Activated CD4-positive, alpha-beta T cell treated with anti-CD3 and anti-CD28 coated beads for 36 hours (primary cell): ENCODE measurements at regions of chr3 and their contacts with region 1.

Region 1: DNA sequence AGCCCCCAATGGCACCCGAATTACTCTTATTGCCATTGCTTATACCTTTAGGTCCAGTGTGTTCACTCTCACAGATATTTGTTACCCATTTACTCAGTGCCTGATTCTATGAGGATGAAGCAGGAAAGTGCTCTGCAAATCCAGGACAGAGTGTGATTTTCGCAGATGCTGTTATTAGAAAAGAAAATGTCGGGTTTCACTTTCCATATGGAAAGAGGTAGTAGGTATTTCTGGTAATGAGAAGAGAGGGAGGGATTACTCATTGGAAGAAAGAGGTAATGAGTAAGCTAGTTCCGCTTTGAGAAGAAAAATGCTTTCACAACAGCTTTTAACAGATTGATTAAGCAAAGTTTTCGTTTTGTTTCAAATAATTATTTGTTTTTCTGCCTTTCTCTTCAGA is 336.3 kb upstream of the CFAP20DC start:
- DNase-seq: no peak
- ATAC-seq: peak; percentile 28
- H3K4me3 Mint-ChIP-seq: peak overlapping the region; percentile 31
- H3K27ac Mint-ChIP-seq: peak overlapping the region; percentile 99
- H3K4me1 Mint-ChIP-seq: peaks cover 86% of the 10 kb centered on the region
- H3K27me3 Mint-ChIP-seq: no peaks in the 10 kb centered on the region

Region 2: GRCh38 chr3:59286791-59287531 is 99.2 kb before region 1 on chr3:
- CTCF ChIA-PET with region 1: no interaction called
- POLR2A ChIA-PET with region 1: no interaction called
- intact Hi-C with region 1: loop called (anchors 1 kb)
- DNase-seq: peak; percentile 63
- ATAC-seq: peak; percentile 96
- H3K4me3 Mint-ChIP-seq: no peak overlapping the region
- H3K27ac Mint-ChIP-seq: peak overlapping the region; percentile 78
- H3K4me1 Mint-ChIP-seq: peaks cover 29% of the 10 kb centered on the region
- H3K27me3 Mint-ChIP-seq: peaks cover 3% of the 10 kb centered on the region

Region 3: DNA sequence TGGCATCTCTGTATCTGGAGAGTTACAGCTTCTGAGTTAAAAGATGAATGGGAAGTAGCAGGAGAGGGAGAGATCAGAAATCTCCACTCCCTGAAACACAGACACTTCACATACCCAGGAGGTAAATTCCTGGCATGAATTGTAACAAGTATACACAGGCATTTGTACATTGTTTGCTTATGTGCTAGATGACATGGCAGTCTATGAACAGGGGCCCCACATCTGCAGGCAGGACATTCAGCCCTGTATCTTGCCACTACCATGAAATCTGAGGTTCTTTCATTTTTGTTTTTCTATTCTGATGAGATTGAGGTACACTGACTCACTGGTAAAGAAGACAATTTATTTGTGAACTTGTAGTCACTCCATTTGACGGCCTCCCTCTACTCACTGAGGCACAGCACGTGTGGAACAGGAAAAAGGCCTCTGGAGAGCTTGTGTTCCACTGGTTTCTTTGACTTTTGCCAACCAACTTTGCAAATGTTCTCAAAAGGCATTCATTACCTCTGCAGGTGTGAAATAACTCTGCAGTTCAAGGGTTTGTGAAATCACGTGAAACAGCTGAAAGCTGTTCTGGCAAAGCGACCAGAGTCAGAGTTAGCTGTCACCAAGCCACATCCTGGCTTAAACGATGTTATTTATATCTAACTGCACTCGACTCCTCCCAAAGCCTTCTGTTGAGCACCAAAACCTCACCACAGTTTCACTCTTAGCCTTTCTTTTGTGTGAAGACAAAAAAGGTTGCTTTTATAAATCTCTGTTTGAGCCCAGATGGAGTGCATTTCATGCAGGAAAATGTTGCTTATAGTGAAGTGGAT is 65.0 kb after region 1 on chr3:
- CTCF ChIA-PET with region 1: interaction called, 4 read pairs
- POLR2A ChIA-PET with region 1: no interaction called
- intact Hi-C with region 1: loop called (anchors 1 kb)
- DNase-seq: peak; percentile 72
- ATAC-seq: peak; percentile 92
- H3K4me3 Mint-ChIP-seq: peak overlapping the region; percentile 50
- H3K27ac Mint-ChIP-seq: peak overlapping the region; percentile 96
- H3K4me1 Mint-ChIP-seq: peaks cover 73% of the 10 kb centered on the region
- H3K27me3 Mint-ChIP-seq: no peaks in the 10 kb centered on the region

Region 4: GRCh38 chr3:59526999-59527398 is 140.8 kb after region 1 on chr3:
- CTCF ChIA-PET with region 1: no interaction called
- POLR2A ChIA-PET with region 1: no interaction called
- intact Hi-C with region 1: loop called (anchors 1 to 5 kb)
- DNase-seq: no peak
- ATAC-seq: peak; percentile 98
- H3K4me3 Mint-ChIP-seq: no peak overlapping the region
- H3K27ac Mint-ChIP-seq: peak overlapping the region; percentile 55
- H3K4me1 Mint-ChIP-seq: peaks cover 18% of the 10 kb centered on the region
- H3K27me3 Mint-ChIP-seq: peaks cover 3% of the 10 kb centered on the region

Region 5: DNA sequence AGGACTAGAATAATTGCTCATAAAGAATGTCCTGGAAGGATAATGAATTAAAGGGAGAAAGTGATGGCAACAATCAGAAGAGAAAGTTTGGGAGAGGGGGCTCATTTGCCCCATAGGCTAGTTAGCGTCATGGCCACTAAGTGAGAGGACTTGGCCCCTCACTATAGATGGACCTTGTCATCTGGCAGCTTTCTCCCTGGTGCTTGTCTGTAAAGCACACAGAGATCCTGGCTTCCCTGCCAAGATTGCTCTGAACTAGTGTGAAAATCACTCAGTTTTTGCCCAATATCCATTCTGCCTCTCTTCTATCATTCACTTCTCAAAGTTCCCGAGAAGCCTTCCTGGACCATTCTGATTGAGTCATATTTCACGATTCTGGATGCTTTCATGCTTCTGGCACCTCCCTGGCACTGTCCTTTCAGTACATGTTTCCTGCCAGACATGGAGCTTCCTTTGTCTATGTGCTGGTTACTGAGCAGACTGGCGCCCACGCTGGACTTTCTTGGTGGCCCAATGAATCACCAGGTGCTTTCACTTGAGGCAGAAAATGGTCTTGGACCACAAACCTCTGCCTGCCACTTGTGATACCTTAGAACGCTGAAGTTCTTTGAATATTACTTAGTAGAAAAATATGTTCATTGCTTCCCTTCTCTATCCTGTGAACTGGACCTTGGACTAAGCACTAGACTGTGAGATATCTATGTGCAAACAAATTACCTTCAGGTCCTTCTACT is 373.3 kb after region 1 on chr3:
- CTCF ChIA-PET with region 1: no interaction called
- POLR2A ChIA-PET with region 1: no interaction called
- intact Hi-C with region 1: loop called in 1 of 2 experiments (anchors 2 kb)
- DNase-seq: peak; percentile 81
- ATAC-seq: peak; percentile 78
- H3K4me3 Mint-ChIP-seq: no peak overlapping the region
- H3K27ac Mint-ChIP-seq: peak overlapping the region; percentile 10
- H3K4me1 Mint-ChIP-seq: peaks cover 74% of the 10 kb centered on the region
- H3K27me3 Mint-ChIP-seq: no peaks in the 10 kb centered on the region

Region 6: GRCh38 chr3:60017631-60018030 is 631.5 kb after region 1 on chr3:
- CTCF ChIA-PET with region 1: no interaction called
- POLR2A ChIA-PET with region 1: no interaction called
- intact Hi-C with region 1: loop called in 1 of 2 experiments (anchors 2 kb)
- DNase-seq: peak; percentile 77
- ATAC-seq: peak; percentile 88
- H3K4me3 Mint-ChIP-seq: peak overlapping the region; percentile 38
- H3K27ac Mint-ChIP-seq: peak overlapping the region; percentile 95
- H3K4me1 Mint-ChIP-seq: peaks cover 77% of the 10 kb centered on the region
- H3K27me3 Mint-ChIP-seq: no peaks in the 10 kb centered on the region